Natural killer cell (primary cell): ENCODE measurements at regions of chr17 and their contacts with region 1.

Region 1: GRCh38 chr17:13182462-13183253 is 164.8 kb upstream of the ELAC2 start:
- DNase-seq: no peak
- ATAC-seq: no peak
- H3K4me3 ChIP-seq: no peak overlapping the region
- H3K4me3 Mint-ChIP-seq: no peak overlapping the region
- H3K27ac ChIP-seq: no peak overlapping the region
- H3K27ac Mint-ChIP-seq: no peak overlapping the region
- H3K4me1 ChIP-seq: no peaks in the 10 kb centered on the region
- H3K4me1 Mint-ChIP-seq: no peaks in the 10 kb centered on the region
- H3K27me3 ChIP-seq: no peaks in the 10 kb centered on the region
- H3K27me3 Mint-ChIP-seq: no peaks in the 10 kb centered on the region
- CTCF ChIP-seq: no peak

Region 2: GRCh38 chr17:13244513-13244912 is 61.9 kb after region 1 on chr17:
- intact Hi-C with region 1: loop called (anchors 10 kb)
- DNase-seq: no peak
- ATAC-seq: no peak
- H3K4me3 ChIP-seq: no peak overlapping the region
- H3K4me3 Mint-ChIP-seq: no peak overlapping the region
- H3K27ac ChIP-seq: no peak overlapping the region
- H3K27ac Mint-ChIP-seq: no peak overlapping the region
- H3K4me1 ChIP-seq: no peaks in the 10 kb centered on the region
- H3K4me1 Mint-ChIP-seq: no peaks in the 10 kb centered on the region
- H3K27me3 ChIP-seq: no peaks in the 10 kb centered on the region
- H3K27me3 Mint-ChIP-seq: no peaks in the 10 kb centered on the region
- CTCF ChIP-seq: no peak

Region 3: GRCh38 chr17:13256537-13256936 is 73.9 kb after region 1 on chr17:
- intact Hi-C with region 1: no loop called
- DNase-seq: no peak
- ATAC-seq: no peak
- H3K4me3 ChIP-seq: no peak overlapping the region
- H3K4me3 Mint-ChIP-seq: no peak overlapping the region
- H3K27ac ChIP-seq: no peak overlapping the region
- H3K27ac Mint-ChIP-seq: no peak overlapping the region
- H3K4me1 ChIP-seq: no peaks in the 10 kb centered on the region
- H3K4me1 Mint-ChIP-seq: no peaks in the 10 kb centered on the region
- H3K27me3 ChIP-seq: no peaks in the 10 kb centered on the region
- H3K27me3 Mint-ChIP-seq: peaks cover 0 to 3% of the 10 kb centered on the region in 2 donors
- CTCF ChIP-seq: no peak

Region 4: GRCh38 chr17:13477180-13477611 is 294.5 kb after region 1 on chr17:
- intact Hi-C with region 1: no loop called
- DNase-seq: no peak
- ATAC-seq: no peak
- H3K4me3 ChIP-seq: no peak overlapping the region
- H3K4me3 Mint-ChIP-seq: no peak overlapping the region
- H3K27ac ChIP-seq: no peak overlapping the region
- H3K27ac Mint-ChIP-seq: no peak overlapping the region
- H3K4me1 ChIP-seq: no peaks in the 10 kb centered on the region
- H3K4me1 Mint-ChIP-seq: no peaks in the 10 kb centered on the region
- H3K27me3 ChIP-seq: no peaks in the 10 kb centered on the region
- H3K27me3 Mint-ChIP-seq: no peaks in the 10 kb centered on the region
- CTCF ChIP-seq: no peak

Region 5: DNA sequence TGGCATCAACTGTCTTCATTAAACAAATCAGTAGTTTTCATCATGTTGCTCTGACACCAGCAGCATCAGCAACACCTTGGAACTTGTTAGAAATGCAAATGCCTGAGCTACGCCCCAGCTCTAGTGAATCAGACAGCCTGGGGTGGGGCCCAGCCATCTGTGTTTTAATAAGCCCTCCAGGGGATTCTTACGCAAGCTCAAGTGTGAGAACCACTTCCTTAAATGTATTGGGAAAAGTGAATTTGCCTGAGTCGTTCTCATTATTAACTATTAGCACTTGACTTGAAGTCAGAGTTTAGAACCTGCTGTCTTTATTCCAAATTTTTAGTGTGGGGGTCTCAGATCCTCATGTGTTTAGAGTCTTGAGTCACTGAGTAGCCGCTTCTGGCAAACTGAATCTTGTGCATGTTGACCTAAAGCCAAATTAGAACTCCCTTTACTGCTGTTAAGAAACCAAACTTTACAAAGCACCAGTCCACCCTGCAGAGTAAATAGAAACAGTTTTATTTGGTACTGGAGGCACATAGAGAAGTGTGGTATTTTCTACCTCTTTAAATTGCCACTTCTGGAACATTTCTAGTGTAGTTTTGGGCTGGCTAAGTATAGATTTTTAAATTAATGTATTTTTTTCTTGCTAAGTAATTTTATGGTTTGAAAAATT is 749.3 kb after region 1 on chr17:
- intact Hi-C with region 1: no loop called
- DNase-seq: peak; percentile 8 to 41
- ATAC-seq: peak; percentile 76 to 95 (median 93)
- H3K4me3 ChIP-seq: no peak overlapping the region
- H3K4me3 Mint-ChIP-seq: no peak overlapping the region
- H3K27ac ChIP-seq: peak overlapping the region; percentile 87
- H3K27ac Mint-ChIP-seq: peak overlapping the region; percentile 85
- H3K4me1 ChIP-seq: peaks cover 7% of the 10 kb centered on the region
- H3K4me1 Mint-ChIP-seq: peaks cover 19% of the 10 kb centered on the region in 2 donors
- H3K27me3 ChIP-seq: no peaks in the 10 kb centered on the region
- H3K27me3 Mint-ChIP-seq: no peaks in the 10 kb centered on the region
- CTCF ChIP-seq: no peak